ENCODE measurements at regions of chr11 and their contacts with region 1.

Region 1: DNA sequence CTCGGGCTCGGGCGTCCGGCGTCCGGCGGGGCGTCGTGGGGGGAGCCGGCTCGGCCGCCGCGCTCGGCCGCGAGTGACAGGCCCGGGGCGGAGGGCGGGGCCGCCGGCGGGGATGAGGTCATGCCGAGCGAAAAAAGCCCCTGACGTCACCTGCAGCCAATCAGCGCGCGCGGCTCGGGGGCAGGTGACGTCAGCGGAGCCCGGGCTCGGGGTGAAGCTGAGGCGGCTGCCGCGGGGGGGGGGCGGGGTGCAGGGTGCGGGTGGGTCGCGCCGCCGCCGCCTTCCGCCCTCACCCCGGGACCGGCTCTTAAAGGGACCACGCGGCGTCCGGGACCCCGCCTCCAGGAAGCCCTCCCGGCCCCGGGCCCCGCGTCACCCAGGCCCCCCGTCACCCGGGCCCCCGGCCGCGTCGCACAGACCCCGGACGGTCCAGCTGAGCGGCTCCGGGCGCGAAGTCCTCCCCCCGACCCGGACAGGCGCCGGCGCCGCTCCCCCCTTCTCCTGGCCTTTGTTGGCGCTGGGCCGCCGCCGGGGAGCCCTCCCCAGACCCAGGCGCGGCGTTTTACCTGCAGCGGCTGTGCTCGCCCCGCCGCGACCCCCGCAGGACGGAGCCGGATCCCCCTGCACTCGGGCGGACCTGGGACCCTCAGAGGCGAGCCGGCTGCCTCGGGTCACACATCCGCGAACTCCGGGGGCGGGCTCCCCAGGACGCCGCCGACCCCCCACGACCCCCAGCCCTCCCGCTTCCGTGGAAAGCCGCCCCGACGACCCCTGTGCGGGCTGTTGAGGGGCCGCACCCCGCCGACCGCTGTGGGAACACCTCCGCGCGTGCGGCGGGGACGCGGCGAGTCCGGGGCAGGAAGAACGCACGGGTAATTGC is at the start of gene DUSP8:
- DNase-seq: peak; percentile 90 to 98 (median 95)
- ATAC-seq: peak; percentile 58
- H3K4me3 ChIP-seq: peak within 1 kb of the TSS; percentile 51 to 63
- H3K4me3 Mint-ChIP-seq: peak within 1 kb of the TSS; percentile 82
- H3K27ac ChIP-seq: peak within 1 kb of the TSS; percentile 59 to 86
- H3K27ac Mint-ChIP-seq: peak within 1 kb of the TSS; percentile 92
- H3K4me1 ChIP-seq: peaks cover 54% of the 10 kb centered on the region
- H3K4me1 Mint-ChIP-seq: peaks cover 37% of the 10 kb centered on the region
- H3K27me3 ChIP-seq: no peaks in the 10 kb centered on the region
- H3K27me3 Mint-ChIP-seq: no peaks in the 10 kb centered on the region
- CTCF ChIP-seq: no peak
- total RNA-seq, gene DUSP8: 123 to 130 TPM

Region 2: DNA sequence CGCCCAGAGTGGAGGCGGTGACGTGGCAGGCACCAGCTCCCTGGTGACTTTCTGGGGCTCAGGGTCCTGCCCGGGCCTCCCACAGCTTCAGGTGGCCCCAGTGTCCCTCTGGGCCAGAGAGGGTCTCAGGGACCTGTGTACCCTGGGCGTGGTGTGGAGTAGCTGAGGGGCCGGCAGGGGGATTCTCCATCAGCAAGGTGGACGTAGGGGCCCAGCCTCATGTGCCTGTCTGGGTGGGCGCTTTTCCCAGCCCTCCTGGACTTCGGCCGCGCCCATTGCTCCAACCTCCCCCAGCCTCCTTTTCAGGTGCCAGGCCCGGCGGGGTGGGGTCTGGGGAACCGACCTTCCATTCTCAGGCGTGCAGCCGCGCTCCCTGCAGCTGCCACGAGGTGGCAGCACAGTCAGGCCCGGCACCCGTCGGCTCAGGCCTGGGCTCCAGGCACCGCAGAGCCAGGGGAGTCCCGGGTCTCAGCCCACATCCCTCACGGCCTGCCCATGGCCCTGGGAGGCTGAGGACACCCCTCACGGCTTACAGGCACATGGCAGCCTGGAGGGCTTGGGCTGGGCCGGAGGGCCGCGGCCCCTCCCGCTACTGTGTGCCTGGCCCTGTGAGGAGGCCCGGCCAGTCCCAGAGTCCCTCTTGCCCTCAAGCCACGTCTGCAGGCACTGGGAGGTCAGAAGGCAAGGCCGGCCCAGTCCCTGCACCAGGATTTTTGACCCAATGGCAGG is 369.5 kb before region 1 on chr11:
- CTCF ChIA-PET with region 1: interaction called, 32 read pairs
- POLR2A ChIA-PET with region 1: interaction called, 3 read pairs
- intact Hi-C with region 1: loop called in 1 of 2 experiments (anchors 1 kb)
- DNase-seq: peak; percentile 34 to 78 (median 60)
- ATAC-seq: peak; percentile 87
- H3K4me3 ChIP-seq: no peak overlapping the region
- H3K4me3 Mint-ChIP-seq: no peak overlapping the region
- H3K27ac ChIP-seq: no peak overlapping the region
- H3K27ac Mint-ChIP-seq: no peak overlapping the region
- H3K4me1 ChIP-seq: no peaks in the 10 kb centered on the region
- H3K4me1 Mint-ChIP-seq: no peaks in the 10 kb centered on the region
- H3K27me3 ChIP-seq: peaks cover 0 to 2% of the 10 kb centered on the region in 2 experiments
- H3K27me3 Mint-ChIP-seq: peaks cover 2% of the 10 kb centered on the region
- CTCF ChIP-seq: peak; percentile 88

Region 3: GRCh38 chr11:1309498-1310317 is 262.7 kb before region 1 on chr11 and contains the start of gene TOLLIP:
- CTCF ChIA-PET with region 1: no interaction called
- POLR2A ChIA-PET with region 1: interaction called, 3 read pairs
- intact Hi-C with region 1: loop called in 1 of 2 experiments (anchors 5 kb)
- DNase-seq: peak; percentile 96 to 99 (median 97)
- ATAC-seq: peak; percentile 76
- H3K4me3 ChIP-seq: peak within 1 kb of the TSS; percentile 83 to 84
- H3K4me3 Mint-ChIP-seq: peak within 1 kb of the TSS; percentile 90
- H3K27ac ChIP-seq: peak within 1 kb of the TSS; percentile 86 to 95
- H3K27ac Mint-ChIP-seq: peak within 1 kb of the TSS; percentile 97
- H3K4me1 ChIP-seq: peaks cover 49% of the 10 kb centered on the region
- H3K4me1 Mint-ChIP-seq: peaks cover 49% of the 10 kb centered on the region
- H3K27me3 ChIP-seq: no peaks in the 10 kb centered on the region
- H3K27me3 Mint-ChIP-seq: no peaks in the 10 kb centered on the region
- CTCF ChIP-seq: no peak
- total RNA-seq, gene TOLLIP: 36.2 to 40.9 TPM

Region 4: GRCh38 chr11:1453611-1454034 is 118.8 kb before region 1 on chr11:
- CTCF ChIA-PET with region 1: interaction called, 6 read pairs
- POLR2A ChIA-PET with region 1: no interaction called
- intact Hi-C with region 1: loop called in 1 of 2 experiments (anchors 1 kb)
- DNase-seq: peak in 5 of 9 experiments; percentile 16 to 54 (median 34)
- ATAC-seq: peak; percentile 68
- H3K4me3 ChIP-seq: no peak overlapping the region
- H3K4me3 Mint-ChIP-seq: no peak overlapping the region
- H3K27ac ChIP-seq: no peak overlapping the region
- H3K27ac Mint-ChIP-seq: no peak overlapping the region
- H3K4me1 ChIP-seq: no peaks in the 10 kb centered on the region
- H3K4me1 Mint-ChIP-seq: no peaks in the 10 kb centered on the region
- H3K27me3 ChIP-seq: no peaks in the 10 kb centered on the region
- H3K27me3 Mint-ChIP-seq: no peaks in the 10 kb centered on the region
- CTCF ChIP-seq: no peak

Region 5: GRCh38 chr11:1541474-1542204 is 30.8 kb before region 1 on chr11:
- CTCF ChIA-PET with region 1: interaction called, 170 read pairs
- POLR2A ChIA-PET with region 1: interaction called, 23 read pairs
- intact Hi-C with region 1: loop called (anchors 1 kb)
- DNase-seq: no peak
- ATAC-seq: no peak
- H3K4me3 ChIP-seq: no peak overlapping the region
- H3K4me3 Mint-ChIP-seq: no peak overlapping the region
- H3K27ac ChIP-seq: no peak overlapping the region
- H3K27ac Mint-ChIP-seq: no peak overlapping the region
- H3K4me1 ChIP-seq: peaks cover 7% of the 10 kb centered on the region
- H3K4me1 Mint-ChIP-seq: peaks cover 6% of the 10 kb centered on the region
- H3K27me3 ChIP-seq: peaks cover 7 to 11% of the 10 kb centered on the region in 2 experiments
- H3K27me3 Mint-ChIP-seq: peaks cover 9% of the 10 kb centered on the region
- CTCF ChIP-seq: no peak

Region 6: GRCh38 chr11:1592628-1593027 is 20.2 kb after region 1 on chr11:
- CTCF ChIA-PET with region 1: interaction called, 32 read pairs
- POLR2A ChIA-PET with region 1: interaction called, 7 read pairs
- intact Hi-C with region 1: no loop called
- DNase-seq: no peak
- ATAC-seq: no peak
- H3K4me3 ChIP-seq: no peak overlapping the region
- H3K4me3 Mint-ChIP-seq: no peak overlapping the region
- H3K27ac ChIP-seq: no peak overlapping the region
- H3K27ac Mint-ChIP-seq: no peak overlapping the region
- H3K4me1 ChIP-seq: peaks cover 15% of the 10 kb centered on the region
- H3K4me1 Mint-ChIP-seq: peaks cover 22% of the 10 kb centered on the region
- H3K27me3 ChIP-seq: peaks cover 0 to 4% of the 10 kb centered on the region in 2 experiments
- H3K27me3 Mint-ChIP-seq: peaks cover 16% of the 10 kb centered on the region
- CTCF ChIP-seq: no peak

Region 7: GRCh38 chr11:1852877-1853276 is 280.4 kb after region 1 on chr11 and contains the start of gene LSP1:
- CTCF ChIA-PET with region 1: no interaction called
- POLR2A ChIA-PET with region 1: no interaction called
- intact Hi-C with region 1: loop called in 1 of 2 experiments (anchors 2 kb)
- DNase-seq: peak; percentile 64 to 96 (median 86)
- ATAC-seq: peak; percentile 65
- H3K4me3 ChIP-seq: peak within 1 kb of the TSS; percentile 81 to 100
- H3K4me3 Mint-ChIP-seq: peak within 1 kb of the TSS; percentile 94
- H3K27ac ChIP-seq: peak within 1 kb of the TSS; percentile 90 to 91
- H3K27ac Mint-ChIP-seq: peak within 1 kb of the TSS; percentile 92
- H3K4me1 ChIP-seq: peaks cover 81% of the 10 kb centered on the region
- H3K4me1 Mint-ChIP-seq: peaks cover 67% of the 10 kb centered on the region
- H3K27me3 ChIP-seq: no peaks in the 10 kb centered on the region
- H3K27me3 Mint-ChIP-seq: no peaks in the 10 kb centered on the region
- CTCF ChIP-seq: no peak
- total RNA-seq, gene LSP1: 190 to 191 TPM